Stomach (tissue), 19 donors: ENCODE measurements at regions of chr9 and their contacts with region 1.

Region 1: DNA sequence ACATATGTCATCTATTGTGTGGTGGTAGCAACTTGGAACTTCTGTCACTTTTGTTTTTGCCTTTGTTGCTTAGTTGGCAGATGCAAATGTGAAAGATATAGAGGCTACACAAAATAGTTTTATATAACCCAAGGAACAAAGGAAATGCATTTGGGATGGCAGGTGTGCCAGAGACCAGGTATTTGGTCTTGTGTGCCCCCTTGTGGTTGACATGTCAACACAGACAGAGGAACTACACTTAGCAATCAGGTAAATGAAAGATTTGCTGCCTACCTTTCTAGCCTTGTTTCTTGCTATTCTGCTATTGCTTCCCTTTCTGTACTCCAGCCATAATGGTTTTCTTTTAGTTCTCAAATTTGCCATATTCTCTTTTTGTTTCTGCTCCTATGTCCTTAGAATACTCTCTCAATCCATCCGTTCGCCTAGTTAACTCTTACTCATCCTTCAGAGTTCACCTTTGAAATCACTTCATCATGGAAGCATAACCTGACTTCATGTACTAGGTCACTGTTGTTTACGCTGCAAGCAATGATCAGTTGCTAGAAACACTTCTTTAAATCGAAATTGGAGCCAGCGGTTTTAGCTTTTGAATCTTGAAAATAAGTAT is 119.5 kb downstream of the TRPM3 start:
- DNase-seq: peak; percentile 49 to 58
- H3K4me3 ChIP-seq: no peak overlapping the region
- H3K27ac ChIP-seq: no peak overlapping the region
- H3K4me1 ChIP-seq: no peaks in the 10 kb centered on the region
- H3K27me3 ChIP-seq: no peaks in the 10 kb centered on the region
- CTCF ChIP-seq: peak in 4 of 7 experiments; percentile 29 to 58 (median 44)
- EP300 ChIP-seq: no peak
- POLR2A ChIP-seq: no peak

Region 2: DNA sequence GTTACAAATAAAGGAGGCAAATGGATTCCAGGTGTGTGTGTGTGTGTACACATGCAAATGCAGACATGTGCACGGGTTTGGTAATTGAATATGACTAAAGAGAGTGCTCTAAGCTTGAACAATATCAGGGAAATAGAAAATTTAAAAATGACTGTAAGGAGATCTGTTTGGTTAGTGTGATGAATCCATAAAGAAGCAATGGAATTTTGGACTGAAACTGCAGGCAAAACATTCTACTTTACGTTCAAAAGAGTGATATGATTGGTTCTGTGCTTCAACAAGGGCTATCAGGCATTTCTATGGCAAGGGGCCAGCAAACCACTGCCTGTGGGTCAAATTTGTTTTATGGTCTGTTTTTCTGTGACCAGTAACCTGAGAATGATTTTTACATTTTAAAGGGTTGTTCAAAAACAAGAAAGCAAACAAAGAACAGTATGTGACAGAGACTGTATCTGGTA is 254.6 kb before region 1 on chr9:
- intact Hi-C with region 1: no loop called
- DNase-seq: peak in 1 of 2 donors; percentile 7
- H3K4me3 ChIP-seq: no peak overlapping the region
- H3K27ac ChIP-seq: no peak overlapping the region
- H3K4me1 ChIP-seq: no peaks in the 10 kb centered on the region
- H3K27me3 ChIP-seq: no peaks in the 10 kb centered on the region
- CTCF ChIP-seq: no peak
- EP300 ChIP-seq: no peak
- POLR2A ChIP-seq: no peak

Region 3: DNA sequence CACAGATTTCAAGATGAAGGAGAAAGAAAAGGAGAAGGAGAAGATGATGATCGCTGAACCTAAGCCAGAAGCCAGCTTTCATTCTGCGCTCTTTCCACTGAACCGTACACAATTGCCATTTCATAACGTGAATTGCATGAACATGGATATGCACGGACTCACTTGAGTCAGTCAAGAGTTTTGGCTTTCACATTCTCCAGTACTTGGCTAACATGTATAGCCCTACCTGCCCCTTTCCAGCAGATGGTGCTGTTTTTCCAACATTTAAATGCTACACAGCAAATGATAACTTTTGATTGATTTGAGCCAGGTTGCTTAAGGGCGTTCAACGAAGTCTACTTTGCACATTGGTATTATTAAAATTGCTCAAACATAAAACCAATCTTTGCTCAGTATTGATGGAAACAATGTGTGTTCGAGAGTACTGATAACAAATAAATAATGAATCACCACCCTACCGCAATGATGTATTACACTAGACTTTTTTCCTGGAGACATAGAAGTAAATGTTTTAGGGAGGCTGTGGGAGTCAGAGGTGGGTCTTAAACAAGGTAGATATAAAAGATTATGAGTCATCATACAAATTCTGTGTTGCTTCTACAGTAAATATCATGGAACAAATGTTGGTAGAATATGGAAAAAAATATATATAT is 76.9 kb before region 1 on chr9:
- intact Hi-C with region 1: loop called (anchors 10 kb)
- DNase-seq: peak; percentile 40 to 78
- H3K4me3 ChIP-seq: no peak overlapping the region
- H3K27ac ChIP-seq: no peak overlapping the region
- H3K4me1 ChIP-seq: peaks cover 0 to 8% (median 6%) of the 10 kb centered on the region in 4 donors
- H3K27me3 ChIP-seq: no peaks in the 10 kb centered on the region
- CTCF ChIP-seq: peak in 5 of 7 experiments; percentile 42 to 69 (median 59)
- EP300 ChIP-seq: no peak
- POLR2A ChIP-seq: no peak

Region 4: DNA sequence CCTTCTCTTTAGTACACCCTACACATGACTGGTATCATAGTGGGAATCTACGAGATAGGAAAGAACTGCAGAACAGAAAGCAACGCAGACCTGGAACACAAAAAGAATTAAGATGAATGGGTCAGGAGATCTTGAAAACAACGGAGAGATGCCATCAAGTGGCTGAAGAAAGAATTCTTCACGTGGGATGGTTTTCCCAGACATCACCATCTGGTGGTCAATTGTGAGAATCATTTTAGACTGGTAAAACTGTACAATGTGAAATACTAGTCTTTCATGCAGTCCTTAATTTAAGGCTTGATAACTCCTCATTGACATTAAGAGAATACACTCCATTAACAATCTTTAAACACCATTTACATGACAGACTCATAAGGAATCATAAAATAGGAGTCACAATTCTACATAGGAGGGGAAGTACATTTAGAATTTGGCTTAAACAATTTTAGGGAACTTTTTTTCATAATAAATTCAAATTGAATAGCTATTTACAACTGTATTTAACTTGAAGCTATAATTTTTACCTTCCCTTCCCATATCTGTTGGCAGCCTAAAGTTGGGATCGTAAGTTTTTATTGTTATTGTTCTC is 247.9 kb after region 1 on chr9:
- intact Hi-C with region 1: loop called (anchors 10 kb)
- DNase-seq: peak in 1 of 2 donors; percentile 81
- H3K4me3 ChIP-seq: no peak overlapping the region
- H3K27ac ChIP-seq: no peak overlapping the region
- H3K4me1 ChIP-seq: peaks cover 0 to 4% (median 0%) of the 10 kb centered on the region in 4 donors
- H3K27me3 ChIP-seq: no peaks in the 10 kb centered on the region
- CTCF ChIP-seq: peak in 5 of 7 experiments; percentile 34 to 59 (median 56)
- EP300 ChIP-seq: no peak
- POLR2A ChIP-seq: no peak